SK-N-SH (cell line): ENCODE measurements at regions of chr9 and their contacts with region 1.

Region 1: GRCh38 chr9:124617471-124618141 is 110.4 kb upstream of the NR5A1 start:
- DNase-seq: peak; percentile 78
- H3K4me3 ChIP-seq: no peak overlapping the region; a peak in 1 of 4 replicates
- H3K27ac ChIP-seq: no peak overlapping the region
- H3K4me1 ChIP-seq: peaks cover 8 to 10% of the 10 kb centered on the region in 2 experiments
- H3K27me3 ChIP-seq: no peaks in the 10 kb centered on the region
- CTCF ChIP-seq: peak; percentile 95
- EP300 ChIP-seq: no peak
- RAD21 ChIP-seq: peak; percentile 99

Region 2: DNA sequence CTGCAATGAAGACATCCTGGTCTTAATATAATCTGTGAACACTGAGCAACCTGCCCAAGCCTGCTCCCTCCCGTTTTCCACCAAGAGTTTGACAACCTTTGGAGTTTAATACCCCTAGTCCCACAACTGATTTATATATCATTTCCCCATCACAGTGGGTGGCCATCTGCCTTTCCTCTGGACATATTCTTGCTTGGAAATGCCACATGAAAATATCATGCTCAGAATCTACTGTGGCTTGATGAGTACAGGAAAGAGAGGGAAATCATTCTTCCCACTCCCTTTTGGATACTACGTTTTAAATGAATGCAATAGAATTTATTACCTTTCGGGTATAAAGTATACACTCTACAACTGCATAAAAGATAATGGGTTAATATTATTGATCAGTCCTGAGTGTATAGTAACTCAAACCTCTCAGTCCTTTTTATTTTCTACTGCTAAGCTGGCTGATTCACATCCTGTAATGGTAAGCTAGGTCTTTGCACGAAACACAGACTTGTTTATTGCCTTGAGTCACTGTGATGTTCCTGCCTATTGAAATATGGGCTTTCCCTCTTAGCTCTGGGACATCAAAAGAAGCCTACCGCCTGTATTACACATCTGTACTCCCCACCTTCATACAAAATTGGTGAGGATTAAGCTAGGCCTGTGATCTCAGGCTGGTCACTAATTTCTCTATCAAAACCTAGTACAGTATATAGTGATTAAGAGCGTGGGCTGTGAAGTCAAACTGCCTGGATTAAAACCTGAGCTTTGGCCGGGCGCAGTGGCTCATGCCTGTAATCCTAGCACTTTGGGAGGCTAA is 42.9 kb before region 1 on chr9:
- CTCF ChIA-PET with region 1: interaction called, 17 read pairs
- POLR2A ChIA-PET with region 1: no interaction called
- DNase-seq: no peak
- H3K4me3 ChIP-seq: no peak overlapping the region
- H3K27ac ChIP-seq: no peak overlapping the region; a peak in 1 of 4 replicates
- H3K4me1 ChIP-seq: peaks cover 6 to 7% of the 10 kb centered on the region in 2 experiments; a peak in 3 of 4 replicates
- H3K27me3 ChIP-seq: no peaks in the 10 kb centered on the region
- CTCF ChIP-seq: no peak
- EP300 ChIP-seq: no peak
- RAD21 ChIP-seq: no peak

Region 3: DNA sequence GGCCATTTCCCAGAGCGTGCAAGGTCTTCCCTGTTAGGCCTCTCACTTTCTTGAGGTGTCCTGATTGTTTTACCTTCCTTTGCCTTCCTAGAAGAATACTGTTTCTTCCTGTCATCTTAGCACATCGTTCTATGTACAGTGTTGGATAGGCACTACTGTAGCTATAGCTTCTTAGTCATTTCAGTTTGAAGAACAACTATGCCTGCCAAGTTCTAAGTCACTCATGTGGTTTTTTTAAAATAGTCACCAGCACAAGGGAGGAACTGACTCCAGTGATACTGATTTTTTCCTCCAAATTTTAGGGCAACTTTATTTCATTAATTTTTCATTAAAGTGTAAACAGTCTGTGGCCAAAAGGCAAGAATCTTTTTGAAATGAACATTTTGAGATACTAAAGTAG is 12.0 kb after region 1 on chr9:
- CTCF ChIA-PET with region 1: interaction called, 39 read pairs
- POLR2A ChIA-PET with region 1: no interaction called
- DNase-seq: no peak
- H3K4me3 ChIP-seq: no peak overlapping the region
- H3K27ac ChIP-seq: peak overlapping the region; percentile 4 to 7; a peak in 2 of 4 replicates
- H3K4me1 ChIP-seq: peaks cover 13 to 20% of the 10 kb centered on the region in 2 experiments
- H3K27me3 ChIP-seq: no peaks in the 10 kb centered on the region
- CTCF ChIP-seq: no peak
- EP300 ChIP-seq: no peak
- RAD21 ChIP-seq: no peak

Region 4: DNA sequence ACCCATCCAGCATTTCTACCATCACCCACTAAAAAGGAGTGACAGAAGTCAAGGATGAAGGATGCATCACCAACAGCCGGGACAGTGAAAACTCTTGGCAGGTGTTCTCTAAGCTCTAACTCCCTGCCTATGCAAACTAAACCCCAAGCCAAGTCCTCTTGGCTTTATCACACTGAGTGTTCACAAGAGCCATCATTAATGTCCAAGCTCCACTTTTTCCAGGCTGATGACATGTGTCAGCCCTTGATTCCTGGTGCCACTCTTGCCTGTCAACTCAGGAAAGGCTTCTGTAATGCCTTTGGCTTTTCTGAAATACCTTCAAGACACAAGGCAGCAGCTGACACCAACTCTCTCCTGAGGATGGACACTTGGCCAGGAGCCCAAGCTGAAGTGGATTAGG is 66.6 kb after region 1 on chr9:
- CTCF ChIA-PET with region 1: interaction called, 12 read pairs
- POLR2A ChIA-PET with region 1: no interaction called
- DNase-seq: no peak
- H3K4me3 ChIP-seq: no peak overlapping the region
- H3K27ac ChIP-seq: no peak overlapping the region
- H3K4me1 ChIP-seq: peaks cover 0 to 3% of the 10 kb centered on the region in 2 experiments; a peak in 1 of 4 replicates
- H3K27me3 ChIP-seq: no peaks in the 10 kb centered on the region
- CTCF ChIP-seq: no peak
- EP300 ChIP-seq: no peak
- RAD21 ChIP-seq: no peak

Region 5: GRCh38 chr9:124743686-124744348 is 126.2 kb after region 1 on chr9:
- CTCF ChIA-PET with region 1: interaction called, 14 read pairs
- POLR2A ChIA-PET with region 1: no interaction called
- DNase-seq: no peak
- H3K4me3 ChIP-seq: no peak overlapping the region
- H3K27ac ChIP-seq: peak overlapping the region; percentile 18 to 65; a peak in 3 of 4 replicates
- H3K4me1 ChIP-seq: peaks cover 8 to 36% of the 10 kb centered on the region in 2 experiments
- H3K27me3 ChIP-seq: no peaks in the 10 kb centered on the region
- CTCF ChIP-seq: no peak
- EP300 ChIP-seq: peak in 1 of 2 experiments; percentile 23; a peak in 1 of 4 replicates
- RAD21 ChIP-seq: no peak

Region 6: GRCh38 chr9:124771021-124771866 is 153.6 kb after region 1 on chr9 and contains the start of gene NR6A1:
- CTCF ChIA-PET with region 1: interaction called, 16 read pairs
- POLR2A ChIA-PET with region 1: no interaction called
- DNase-seq: peak; percentile 98
- H3K4me3 ChIP-seq: peak within 1 kb of the TSS; percentile 75 to 92
- H3K27ac ChIP-seq: peak within 1 kb of the TSS; percentile 71 to 82
- H3K4me1 ChIP-seq: peaks cover 8 to 16% of the 10 kb centered on the region in 2 experiments; a peak in 3 of 4 replicates
- H3K27me3 ChIP-seq: no peaks in the 10 kb centered on the region
- CTCF ChIP-seq: peak; percentile 47
- EP300 ChIP-seq: peak in 1 of 2 experiments; percentile 73; a peak in 1 of 4 replicates
- RAD21 ChIP-seq: no peak
- polyA plus RNA-seq, gene NR6A1: 1.2 and 1.4 TPM in 2 replicates